ENCODE measurements at regions of chr11 and their contacts with region 1.

Region 1: GRCh38 chr11:60841797-60842667 is at the start of gene CCDC86:
- DNase-seq: peak; percentile 98
- H3K4me3 Mint-ChIP-seq: peak within 1 kb of the TSS; percentile 78
- H3K27ac Mint-ChIP-seq: peak within 1 kb of the TSS; percentile 86
- H3K4me1 Mint-ChIP-seq: peaks cover 33% of the 10 kb centered on the region
- H3K27me3 Mint-ChIP-seq: no peaks in the 10 kb centered on the region
- total RNA-seq, gene CCDC86: 38.8 to 41.2 TPM

Region 2: GRCh38 chr11:60887556-60887955 is 45.5 kb after region 1 on chr11:
- CTCF ChIA-PET with region 1: interaction called, 8 read pairs
- intact Hi-C with region 1: loop called (anchors 1 kb)
- DNase-seq: peak; percentile 61
- H3K4me3 Mint-ChIP-seq: no peak overlapping the region
- H3K27ac Mint-ChIP-seq: no peak overlapping the region
- H3K4me1 Mint-ChIP-seq: peaks cover 2% of the 10 kb centered on the region
- H3K27me3 Mint-ChIP-seq: no peaks in the 10 kb centered on the region

Region 3: DNA sequence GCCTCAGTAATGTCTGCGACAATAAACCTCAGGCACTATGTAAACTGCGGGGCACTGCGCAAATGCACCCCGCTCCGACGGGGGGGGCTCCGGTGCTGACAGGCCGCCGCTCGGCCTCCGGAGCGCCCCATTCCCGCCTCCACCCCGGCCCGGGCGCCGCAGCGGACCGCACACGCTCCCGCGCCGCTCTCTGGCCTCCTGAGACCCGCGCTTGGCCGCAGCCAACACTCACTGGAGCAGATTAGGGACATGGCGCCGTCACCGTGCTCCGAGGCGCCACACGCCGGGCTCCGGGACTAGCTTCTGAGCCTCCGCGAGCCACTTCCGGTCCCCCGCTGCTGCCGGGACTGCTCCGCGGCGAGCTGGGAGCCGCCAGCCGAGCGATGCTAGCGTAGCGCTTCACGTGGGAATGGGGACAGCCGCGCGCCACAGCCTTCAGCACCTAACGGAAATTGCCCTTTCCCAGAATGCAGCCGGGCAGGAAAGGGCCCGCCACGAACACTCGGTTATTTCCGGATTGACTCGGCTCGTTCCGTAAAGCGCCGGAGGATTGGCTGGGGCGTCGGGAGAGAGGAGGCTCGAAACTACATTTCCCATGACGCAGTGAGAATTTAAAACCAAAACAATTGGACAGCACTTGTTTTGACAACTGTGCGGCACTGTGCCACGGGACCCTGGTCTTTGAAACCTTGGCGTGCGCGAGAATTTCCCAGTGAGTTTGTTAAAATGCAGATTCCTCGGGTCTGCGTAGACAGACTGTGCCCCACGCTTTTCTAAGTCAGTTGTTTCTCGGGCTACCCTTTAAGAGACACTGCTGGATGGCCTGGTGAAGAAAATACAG is 64.3 kb after region 1 on chr11 and contains the start of gene PRPF19:
- CTCF ChIA-PET with region 1: no interaction called
- intact Hi-C with region 1: loop called (anchors 1 kb)
- DNase-seq: peak; percentile 100
- H3K4me3 Mint-ChIP-seq: peak within 1 kb of the TSS; percentile 80
- H3K27ac Mint-ChIP-seq: peak within 1 kb of the TSS; percentile 92
- H3K4me1 Mint-ChIP-seq: peaks cover 40% of the 10 kb centered on the region
- H3K27me3 Mint-ChIP-seq: no peaks in the 10 kb centered on the region
- total RNA-seq, gene PRPF19: 108 to 119 TPM

Region 4: GRCh38 chr11:60951899-60952741 is 110.1 kb after region 1 on chr11 and contains the start of gene SLC15A3:
- CTCF ChIA-PET with region 1: no interaction called
- intact Hi-C with region 1: loop called (anchors 5 kb)
- DNase-seq: peak; percentile 64
- H3K4me3 Mint-ChIP-seq: peak within 1 kb of the TSS; percentile 68
- H3K27ac Mint-ChIP-seq: peak within 1 kb of the TSS; percentile 69
- H3K4me1 Mint-ChIP-seq: peaks cover 27% of the 10 kb centered on the region
- H3K27me3 Mint-ChIP-seq: no peaks in the 10 kb centered on the region
- total RNA-seq, gene SLC15A3: 5.6 to 5.8 TPM

Region 5: DNA sequence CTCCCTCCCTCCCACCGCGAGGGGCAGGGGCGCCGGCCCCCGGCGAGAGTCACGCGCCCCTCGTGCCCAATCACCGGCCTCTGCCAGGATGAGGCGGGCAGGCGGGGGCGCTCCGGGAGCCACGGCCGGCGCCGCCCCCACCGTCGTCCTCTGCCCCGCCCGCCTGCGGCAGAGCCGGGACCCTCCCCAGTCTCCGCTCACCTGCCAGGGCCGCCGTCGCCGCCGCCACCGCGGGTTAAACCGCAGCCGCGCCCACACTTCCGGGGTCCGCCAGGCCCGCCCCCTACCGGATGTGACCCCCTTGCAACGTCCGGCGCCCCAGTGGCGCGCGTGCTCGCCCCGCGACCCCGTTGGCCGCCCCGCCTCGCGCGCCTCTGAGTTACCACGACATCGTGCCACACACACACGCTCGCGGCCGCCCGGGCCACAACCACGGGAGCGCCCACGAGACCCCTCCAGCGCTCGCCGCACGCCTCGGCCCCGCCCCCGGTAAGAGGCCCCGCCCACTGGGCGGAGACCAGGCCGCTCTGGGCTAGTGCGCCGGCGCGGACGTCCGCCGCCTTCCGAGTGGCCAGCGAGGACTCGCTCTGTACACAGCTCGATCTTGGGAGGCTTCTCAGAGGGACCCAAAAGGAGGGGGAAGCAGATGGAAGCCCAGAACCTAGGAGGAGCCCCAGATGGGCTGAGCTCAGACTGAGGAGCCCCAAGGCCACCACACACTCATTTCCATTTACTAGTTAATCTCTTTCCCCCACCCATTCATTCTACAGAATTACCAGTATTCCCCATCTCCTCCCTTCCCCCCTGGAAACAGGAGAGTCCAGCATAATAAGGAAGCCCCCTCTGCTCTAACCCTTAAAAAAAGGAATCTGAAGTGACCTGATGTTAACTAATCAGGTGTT is 319.4 kb after region 1 on chr11 and contains the start of gene VPS37C:
- CTCF ChIA-PET with region 1: no interaction called
- intact Hi-C with region 1: loop called (anchors 10 kb)
- DNase-seq: peak; percentile 91
- H3K4me3 Mint-ChIP-seq: peak within 1 kb of the TSS; percentile 94
- H3K27ac Mint-ChIP-seq: peak within 1 kb of the TSS; percentile 93
- H3K4me1 Mint-ChIP-seq: peaks cover 62% of the 10 kb centered on the region
- H3K27me3 Mint-ChIP-seq: no peaks in the 10 kb centered on the region
- total RNA-seq, gene VPS37C: 8.5 to 8.9 TPM

Region 6: GRCh38 chr11:61361686-61362541 is 519.9 kb after region 1 on chr11 and contains the starts of genes CYB561A3 and TMEM138:
- CTCF ChIA-PET with region 1: no interaction called
- intact Hi-C with region 1: loop called (anchors 5 kb)
- DNase-seq: peak; percentile 94
- H3K4me3 Mint-ChIP-seq: peak within 1 kb of the TSS; percentile 100
- H3K27ac Mint-ChIP-seq: peak within 1 kb of the TSS; percentile 96
- H3K4me1 Mint-ChIP-seq: peaks cover 42% of the 10 kb centered on the region
- H3K27me3 Mint-ChIP-seq: no peaks in the 10 kb centered on the region
- total RNA-seq, gene CYB561A3: 31.7 to 31.8 TPM
- total RNA-seq, gene TMEM138: 35.6 to 41.4 TPM

Measured in activated naive CD4-positive, alpha-beta T cell treated with anti-CD3 and anti-CD28 coated beads for 36 hours (primary cell).